Activated CD4-positive, alpha-beta memory T cell treated with anti-CD3 and anti-CD28 coated beads for 36 hours (primary cell): ENCODE measurements at regions of chr1 and their contacts with region 1.

Region 1: DNA sequence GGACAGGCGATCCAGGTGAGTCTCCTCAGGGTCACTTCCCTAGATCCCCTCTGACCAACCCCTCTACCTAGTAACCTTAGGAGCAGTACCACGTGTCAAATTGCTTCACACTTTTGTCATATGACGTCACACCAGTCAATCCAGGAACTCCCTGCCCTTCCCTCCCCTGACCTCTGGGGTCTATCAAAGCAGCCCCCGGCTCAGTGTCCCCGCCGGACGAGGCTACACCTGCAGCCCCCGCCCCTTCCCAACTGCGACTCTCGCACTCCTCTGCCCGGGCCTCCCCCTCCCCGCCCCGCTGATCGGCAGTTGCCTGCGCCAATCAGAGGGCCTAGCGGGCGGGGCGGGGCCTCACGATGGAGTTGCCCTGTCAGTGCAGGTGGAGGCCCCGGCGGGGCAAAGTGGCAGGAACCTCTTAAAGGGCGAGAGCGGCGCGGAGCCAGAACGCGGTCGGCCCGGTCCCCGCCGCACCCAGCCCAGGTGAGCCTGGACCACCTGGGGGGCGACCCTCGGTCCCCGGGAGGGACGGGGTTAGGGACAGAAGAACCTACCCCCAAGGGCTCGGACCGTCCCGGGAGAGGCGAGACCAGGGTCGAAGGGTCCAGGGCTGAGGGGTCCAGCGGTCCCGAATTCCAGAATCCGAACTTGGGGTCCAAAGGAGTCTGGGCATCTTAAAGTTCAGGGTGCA is 27.5 kb upstream of the EPB41 start:
- DNase-seq: peak; percentile 93
- H3K4me3 Mint-ChIP-seq: peak overlapping the region; percentile 80
- H3K27ac Mint-ChIP-seq: peak overlapping the region; percentile 91
- H3K4me1 Mint-ChIP-seq: peaks cover 52% of the 10 kb centered on the region
- H3K27me3 Mint-ChIP-seq: no peaks in the 10 kb centered on the region

Region 2: GRCh38 chr1:28505406-28506187 is 381.3 kb before region 1 on chr1 and contains the start of gene RCC1:
- CTCF ChIA-PET with region 1: no interaction called
- POLR2A ChIA-PET with region 1: no interaction called
- intact Hi-C with region 1: loop called (anchors 5 kb)
- DNase-seq: peak; percentile 98
- H3K4me3 Mint-ChIP-seq: peak within 1 kb of the TSS; percentile 97
- H3K27ac Mint-ChIP-seq: peak within 1 kb of the TSS; percentile 97
- H3K4me1 Mint-ChIP-seq: peaks cover 38% of the 10 kb centered on the region
- H3K27me3 Mint-ChIP-seq: peaks cover 6% of the 10 kb centered on the region
- total RNA-seq, gene RCC1: 83.5 to 86.1 TPM

Region 3: DNA sequence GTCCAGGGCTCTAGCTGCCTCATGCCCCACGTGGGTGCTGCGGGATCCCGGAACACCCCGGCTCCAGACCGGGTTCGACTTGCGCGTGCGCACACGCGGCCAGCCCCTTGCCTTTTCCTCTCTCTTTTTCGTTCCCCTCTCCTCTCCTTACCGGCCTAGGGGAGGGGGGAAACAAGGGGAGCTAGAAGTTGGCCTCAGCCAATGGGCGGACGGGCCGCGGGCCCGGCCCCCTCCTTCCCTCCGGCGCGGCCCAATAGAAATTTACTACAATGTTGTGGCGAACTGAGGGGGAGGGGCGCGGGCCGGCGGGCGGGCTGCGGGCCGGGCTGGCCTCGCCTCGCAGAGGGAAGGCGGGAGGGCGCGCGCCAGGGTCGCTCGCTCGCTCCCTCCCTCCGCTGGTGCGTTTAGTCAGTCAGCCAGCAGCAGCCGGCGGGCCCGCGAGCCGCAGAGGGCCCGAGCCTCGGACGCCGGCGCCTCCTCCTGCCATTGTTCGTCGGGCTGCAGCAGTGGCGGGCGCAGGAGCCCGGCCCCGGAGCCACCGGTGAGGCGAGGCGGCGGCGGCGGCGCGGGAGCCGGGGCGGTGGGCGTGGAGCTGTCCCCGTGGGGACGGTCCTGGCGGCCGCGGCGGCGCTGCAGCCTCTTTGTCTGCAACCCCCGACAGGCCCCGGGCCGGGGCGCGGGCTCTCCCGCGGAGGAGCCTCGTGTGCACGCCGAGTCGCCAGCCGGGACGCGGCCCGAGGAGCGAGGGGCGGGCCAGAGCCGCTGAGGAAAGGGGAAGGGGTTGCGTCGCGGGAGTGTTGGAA is 27.6 kb after region 1 on chr1 and contains the start of gene EPB41:
- CTCF ChIA-PET with region 1: interaction called, 6 read pairs
- POLR2A ChIA-PET with region 1: interaction called, 5 read pairs
- intact Hi-C with region 1: loop called (anchors 1 kb)
- DNase-seq: peak; percentile 93
- H3K4me3 Mint-ChIP-seq: peak within 1 kb of the TSS; percentile 98
- H3K27ac Mint-ChIP-seq: peak within 1 kb of the TSS; percentile 93
- H3K4me1 Mint-ChIP-seq: peaks cover 50% of the 10 kb centered on the region
- H3K27me3 Mint-ChIP-seq: no peaks in the 10 kb centered on the region
- total RNA-seq, gene EPB41: 67.6 to 71.0 TPM

Region 4: DNA sequence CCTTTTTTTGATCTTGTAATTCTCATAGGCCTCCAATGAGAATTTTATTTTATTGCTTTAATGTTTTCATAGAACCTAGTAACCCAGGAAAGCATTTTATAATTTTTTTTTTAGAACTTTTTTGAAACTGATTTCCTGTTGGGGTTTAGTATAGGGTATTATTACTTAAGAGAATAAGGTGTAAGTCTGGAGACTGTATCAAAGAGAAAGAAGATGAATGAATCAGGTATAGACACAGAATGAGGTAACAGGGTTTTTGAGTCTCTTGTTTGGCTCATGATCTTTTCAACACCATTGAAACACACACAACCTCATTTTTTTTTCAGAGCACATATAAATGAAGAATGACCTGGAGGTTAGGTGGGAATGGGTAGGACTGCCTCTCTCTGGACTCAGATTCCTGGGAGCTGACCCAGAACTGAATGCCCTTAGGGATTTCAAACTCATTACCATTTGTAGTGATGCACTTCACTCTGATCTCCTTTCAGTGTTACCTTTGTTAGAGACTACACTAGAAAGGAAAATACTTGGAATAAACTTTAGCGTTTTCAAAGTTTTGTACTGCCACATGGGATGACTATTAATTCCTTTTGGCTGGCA is 78.5 kb after region 1 on chr1:
- CTCF ChIA-PET with region 1: interaction called, 4 read pairs
- POLR2A ChIA-PET with region 1: no interaction called
- intact Hi-C with region 1: loop called (anchors 2 kb)
- DNase-seq: no peak
- H3K4me3 Mint-ChIP-seq: no peak overlapping the region
- H3K27ac Mint-ChIP-seq: no peak overlapping the region
- H3K4me1 Mint-ChIP-seq: peaks cover 54% of the 10 kb centered on the region
- H3K27me3 Mint-ChIP-seq: no peaks in the 10 kb centered on the region

Region 5: GRCh38 chr1:29124366-29125236 is 237.7 kb after region 1 on chr1:
- CTCF ChIA-PET with region 1: interaction called, 19 read pairs
- POLR2A ChIA-PET with region 1: interaction called, 3 read pairs
- intact Hi-C with region 1: loop called (anchors 1 kb)
- DNase-seq: peak; percentile 74
- H3K4me3 Mint-ChIP-seq: peak overlapping the region; percentile 70
- H3K27ac Mint-ChIP-seq: no peak overlapping the region
- H3K4me1 Mint-ChIP-seq: no peaks in the 10 kb centered on the region
- H3K27me3 Mint-ChIP-seq: peaks cover 18% of the 10 kb centered on the region

Region 6: GRCh38 chr1:29202584-29203340 is 315.9 kb after region 1 on chr1:
- CTCF ChIA-PET with region 1: interaction called, 43 read pairs
- POLR2A ChIA-PET with region 1: no interaction called
- intact Hi-C with region 1: loop called (anchors 1 kb)
- DNase-seq: peak; percentile 94
- H3K4me3 Mint-ChIP-seq: no peak overlapping the region
- H3K27ac Mint-ChIP-seq: peak overlapping the region; percentile 23
- H3K4me1 Mint-ChIP-seq: peaks cover 6% of the 10 kb centered on the region
- H3K27me3 Mint-ChIP-seq: no peaks in the 10 kb centered on the region